Thyroid gland (tissue), 4 donors: ENCODE measurements at regions of chr3 and their contacts with region 1.

Region 1: GRCh38 chr3:168213920-168214319 is 118.2 kb upstream of the GOLIM4 start:
- DNase-seq: no peak
- H3K4me3 ChIP-seq: no peak overlapping the region
- H3K27ac ChIP-seq: no peak overlapping the region
- H3K4me1 ChIP-seq: no peaks in the 10 kb centered on the region
- H3K27me3 ChIP-seq: no peaks in the 10 kb centered on the region
- CTCF ChIP-seq: no peak
- POLR2A ChIP-seq: no peak

Region 2: DNA sequence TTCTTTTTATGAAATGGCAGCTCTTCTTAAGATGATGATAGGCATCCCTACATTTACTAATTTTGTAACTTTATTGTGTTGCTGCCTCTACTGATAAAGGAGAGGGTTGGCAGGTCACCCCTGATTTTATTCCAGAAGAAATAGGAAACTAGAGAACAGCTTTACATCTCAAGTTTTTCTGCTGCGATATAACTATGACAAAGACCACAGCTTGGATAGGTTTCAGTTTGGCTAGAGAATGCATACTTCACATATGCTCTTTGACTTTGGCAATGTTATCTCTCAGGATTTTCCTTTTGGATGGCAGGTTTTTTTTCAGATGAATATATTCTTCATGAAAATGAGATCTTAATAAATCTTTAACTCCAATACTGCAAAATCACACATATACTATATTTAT is 277.1 kb after region 1 on chr3:
- intact Hi-C with region 1: no loop called
- DNase-seq: no peak
- H3K4me3 ChIP-seq: no peak overlapping the region
- H3K27ac ChIP-seq: no peak overlapping the region
- H3K4me1 ChIP-seq: no peaks in the 10 kb centered on the region
- H3K27me3 ChIP-seq: no peaks in the 10 kb centered on the region
- CTCF ChIP-seq: no peak
- POLR2A ChIP-seq: no peak

Region 3: GRCh38 chr3:168847291-168847883 is 633.5 kb after region 1 on chr3:
- intact Hi-C with region 1: loop called (anchors 5 kb)
- DNase-seq: peak; percentile 5 to 17
- H3K4me3 ChIP-seq: no peak overlapping the region
- H3K27ac ChIP-seq: no peak overlapping the region
- H3K4me1 ChIP-seq: no peaks in the 10 kb centered on the region
- H3K27me3 ChIP-seq: no peaks in the 10 kb centered on the region
- CTCF ChIP-seq: peak in 5 of 6 experiments; percentile 47 to 78 (median 64)
- POLR2A ChIP-seq: no peak